Heart right ventricle (tissue), 16 donors: ENCODE measurements at regions of chr1 and their contacts with region 1.

Region 1: DNA sequence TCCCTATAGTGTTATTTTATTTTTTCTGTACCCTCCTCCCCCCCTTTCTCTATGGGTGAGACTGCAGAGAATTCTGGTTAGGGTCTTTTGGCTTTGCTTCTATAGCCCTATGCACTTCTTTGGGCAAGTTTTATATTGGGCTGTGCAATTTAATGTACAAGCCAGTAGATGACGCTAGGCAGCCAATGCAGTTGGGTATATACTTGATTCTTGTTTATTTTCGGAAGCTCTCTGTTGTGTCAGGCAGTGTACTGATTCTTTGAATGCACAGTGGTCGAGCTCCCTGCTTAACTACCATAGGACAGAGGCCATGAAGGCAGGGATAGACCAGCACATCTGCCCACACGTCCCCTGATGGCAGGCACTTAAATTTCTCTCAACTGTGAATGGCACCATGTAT is 34.1 kb upstream of the GPR52 start:
- DNase-seq: no peak
- ATAC-seq: peak in 3 of 8 donors; percentile 14 to 39 (median 20)
- H3K4me3 ChIP-seq: peak overlapping the region in 1 of 10 donors; percentile 20
- H3K27ac ChIP-seq: no peak overlapping the region
- H3K4me1 ChIP-seq: peaks cover 0 to 10% (median 0%) of the 10 kb centered on the region in 9 donors
- H3K27me3 ChIP-seq: no peaks in the 10 kb centered on the region
- CTCF ChIP-seq: peak in 6 of 9 donors; percentile 31 to 46 (median 35)

Region 2: DNA sequence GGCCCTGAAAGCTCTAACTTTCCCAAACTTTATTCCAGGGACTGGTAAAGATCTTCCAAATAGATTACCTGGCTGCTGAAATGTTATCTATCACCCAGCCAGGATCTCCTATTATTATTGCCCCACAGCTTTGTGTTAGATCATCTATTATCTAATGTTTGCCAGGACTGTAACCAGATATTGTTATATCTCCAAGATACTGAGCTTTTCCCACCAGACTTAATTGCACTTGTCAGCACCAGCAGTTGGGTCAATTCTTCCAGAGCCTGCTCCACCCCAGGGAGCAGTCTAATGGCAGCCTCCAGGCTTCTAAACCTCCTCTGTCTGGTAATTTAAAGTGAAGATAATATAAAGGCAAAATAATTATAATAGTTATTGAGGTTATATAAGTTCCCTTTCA is 877.4 kb before region 1 on chr1:
- intact Hi-C with region 1: no loop called
- DNase-seq: no peak
- ATAC-seq: no peak
- H3K4me3 ChIP-seq: no peak overlapping the region
- H3K27ac ChIP-seq: no peak overlapping the region
- H3K4me1 ChIP-seq: peaks cover 0 to 6% (median 0%) of the 10 kb centered on the region in 9 donors
- H3K27me3 ChIP-seq: no peaks in the 10 kb centered on the region
- CTCF ChIP-seq: no peak

Region 3: DNA sequence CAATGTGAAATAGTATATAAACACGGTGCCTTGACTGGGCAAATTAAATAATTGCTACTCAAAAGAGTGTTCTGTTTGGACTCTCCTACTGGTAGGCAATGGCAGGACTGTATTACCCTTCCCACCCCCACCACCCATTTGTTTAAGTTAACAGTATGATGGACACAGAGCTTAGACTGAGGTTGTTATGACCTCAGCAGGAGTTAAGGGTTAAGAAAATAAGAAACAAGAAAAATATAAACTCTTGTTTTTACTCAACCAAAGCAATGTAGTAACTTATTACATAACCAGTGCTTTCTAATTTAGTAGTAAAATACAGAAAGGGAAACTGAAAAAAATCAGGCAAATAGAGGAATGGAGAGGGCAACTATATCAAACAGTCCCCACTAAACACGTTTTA is 476.6 kb before region 1 on chr1:
- intact Hi-C with region 1: no loop called
- DNase-seq: no peak
- ATAC-seq: no peak
- H3K4me3 ChIP-seq: no peak overlapping the region
- H3K27ac ChIP-seq: no peak overlapping the region
- H3K4me1 ChIP-seq: no peaks in the 10 kb centered on the region
- H3K27me3 ChIP-seq: no peaks in the 10 kb centered on the region
- CTCF ChIP-seq: no peak

Region 4: GRCh38 chr1:174276087-174276486 is 137.5 kb before region 1 on chr1:
- intact Hi-C with region 1: loop called in 1 of 10 experiments (anchors 10 kb)
- DNase-seq: no peak
- ATAC-seq: no peak
- H3K4me3 ChIP-seq: no peak overlapping the region
- H3K27ac ChIP-seq: no peak overlapping the region
- H3K4me1 ChIP-seq: peaks cover 0 to 3% (median 0%) of the 10 kb centered on the region in 9 donors
- H3K27me3 ChIP-seq: no peaks in the 10 kb centered on the region
- CTCF ChIP-seq: no peak